CD4-positive, alpha-beta memory T cell (primary cell): ENCODE measurements at regions of chr2 and their contacts with region 1.

Region 1: GRCh38 chr2:68909793-68910674 is 38.8 kb upstream of the BMP10 start:
- DNase-seq: peak; percentile 43 to 69 (median 54)
- H3K4me3 ChIP-seq: no peak overlapping the region
- H3K4me3 Mint-ChIP-seq: peak overlapping the region in 5 of 8 donors; percentile 15 to 70 (median 55)
- H3K27ac ChIP-seq: no peak overlapping the region
- H3K27ac Mint-ChIP-seq: peak overlapping the region; percentile 70 to 92 (median 84)
- H3K4me1 ChIP-seq: peaks cover 76% of the 10 kb centered on the region
- H3K4me1 Mint-ChIP-seq: peaks cover 31 to 38% (median 36%) of the 10 kb centered on the region in 4 donors
- H3K27me3 ChIP-seq: no peaks in the 10 kb centered on the region
- H3K27me3 Mint-ChIP-seq: no peaks in the 10 kb centered on the region

Region 2: DNA sequence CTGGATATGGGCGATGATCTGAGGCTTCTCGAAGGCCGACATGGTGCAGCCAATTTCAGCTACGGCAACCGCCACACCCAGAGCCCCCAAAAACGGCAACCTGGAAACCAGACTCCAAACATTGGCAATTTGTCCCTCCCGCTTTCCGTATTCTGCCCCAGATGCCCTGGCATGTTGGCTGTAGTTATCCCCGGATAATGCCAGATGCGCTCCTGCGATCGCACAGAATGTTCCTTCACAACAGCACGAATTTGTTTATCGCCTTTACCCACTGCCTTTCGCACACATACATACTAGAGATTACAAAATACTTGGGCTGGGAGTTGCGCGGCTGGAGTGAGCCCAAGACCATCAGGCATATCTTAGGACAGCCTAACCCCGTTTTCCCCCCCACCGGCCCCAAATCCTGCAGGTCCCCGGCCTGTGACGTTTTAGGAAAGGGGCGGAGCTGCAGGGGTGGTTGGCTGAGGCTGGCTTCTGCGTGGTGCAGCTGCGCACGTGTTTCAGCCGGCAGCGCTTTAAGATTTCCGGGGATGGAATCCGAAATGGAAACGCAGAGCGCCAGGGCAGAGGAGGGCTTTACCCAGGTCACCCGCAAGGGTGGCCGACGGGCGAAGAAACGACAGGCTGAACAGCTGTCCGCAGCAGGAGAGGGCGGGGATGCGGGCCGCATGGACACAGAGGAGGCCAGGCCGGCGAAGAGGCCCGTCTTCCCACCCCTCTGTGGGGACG is 752.5 kb before region 1 on chr2 and contains the start of gene PNO1:
- CTCF ChIA-PET with region 1: no interaction called
- POLR2A ChIA-PET with region 1: no interaction called
- intact Hi-C with region 1: loop called (anchors 5 kb)
- DNase-seq: peak; percentile 97 to 98 (median 98)
- H3K4me3 ChIP-seq: peak within 1 kb of the TSS; percentile 82 to 97
- H3K4me3 Mint-ChIP-seq: peak within 1 kb of the TSS; percentile 95 to 99 (median 98)
- H3K27ac ChIP-seq: peak within 1 kb of the TSS; percentile 97
- H3K27ac Mint-ChIP-seq: peak within 1 kb of the TSS; percentile 99 to 100 (median 100)
- H3K4me1 ChIP-seq: peaks cover 40% of the 10 kb centered on the region
- H3K4me1 Mint-ChIP-seq: peaks cover 29 to 65% (median 45%) of the 10 kb centered on the region in 4 donors
- H3K27me3 ChIP-seq: no peaks in the 10 kb centered on the region
- H3K27me3 Mint-ChIP-seq: peaks cover 0 to 2% of the 10 kb centered on the region in 2 donors
- total RNA-seq, gene PNO1: 8.7 to 11.3 TPM

Region 3: DNA sequence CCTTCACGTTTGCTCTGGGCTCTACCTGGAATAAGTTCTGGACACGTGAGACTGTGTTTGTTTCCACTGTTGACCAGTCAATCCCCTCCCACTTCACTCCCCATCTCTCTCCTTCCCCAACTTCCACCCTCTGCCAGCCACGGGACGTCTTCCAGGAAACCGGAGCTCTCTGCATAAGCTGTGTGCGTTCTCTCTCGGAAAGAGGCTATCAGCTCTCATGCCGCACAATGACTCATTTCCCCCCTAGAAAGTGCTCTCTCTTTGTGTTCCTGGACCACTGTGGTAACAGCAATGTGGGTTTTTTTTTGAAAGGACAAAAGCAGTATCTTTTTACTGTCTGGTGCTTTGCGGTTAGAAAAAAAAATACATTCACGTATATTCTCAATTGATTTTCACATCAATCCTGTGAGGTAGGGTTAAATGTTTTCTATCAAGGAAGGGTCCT is 256.5 kb before region 1 on chr2:
- CTCF ChIA-PET with region 1: no interaction called
- POLR2A ChIA-PET with region 1: no interaction called
- intact Hi-C with region 1: no loop called
- DNase-seq: peak; percentile 1 to 60 (median 21)
- H3K4me3 ChIP-seq: no peak overlapping the region
- H3K4me3 Mint-ChIP-seq: peak overlapping the region in 5 of 8 donors; percentile 12 to 58 (median 40)
- H3K27ac ChIP-seq: no peak overlapping the region
- H3K27ac Mint-ChIP-seq: peak overlapping the region in 5 of 7 donors; percentile 4 to 37 (median 26)
- H3K4me1 ChIP-seq: peaks cover 24% of the 10 kb centered on the region
- H3K4me1 Mint-ChIP-seq: peaks cover 10 to 32% (median 19%) of the 10 kb centered on the region in 4 donors
- H3K27me3 ChIP-seq: no peaks in the 10 kb centered on the region
- H3K27me3 Mint-ChIP-seq: peaks cover 2 to 11% of the 10 kb centered on the region in 2 donors

Region 4: GRCh38 chr2:68715353-68716041 is 194.5 kb before region 1 on chr2:
- CTCF ChIA-PET with region 1: interaction called, 73 read pairs
- POLR2A ChIA-PET with region 1: interaction called, 24 read pairs
- intact Hi-C with region 1: no loop called
- DNase-seq: peak; percentile 39 to 55 (median 45)
- H3K4me3 ChIP-seq: peak overlapping the region in 1 of 2 donors; percentile 37
- H3K4me3 Mint-ChIP-seq: peak overlapping the region in 7 of 8 donors; percentile 44 to 76 (median 56)
- H3K27ac ChIP-seq: peak overlapping the region; percentile 29
- H3K27ac Mint-ChIP-seq: peak overlapping the region; percentile 54 to 93 (median 86)
- H3K4me1 ChIP-seq: peaks cover 63% of the 10 kb centered on the region
- H3K4me1 Mint-ChIP-seq: peaks cover 63 to 88% (median 70%) of the 10 kb centered on the region in 4 donors
- H3K27me3 ChIP-seq: no peaks in the 10 kb centered on the region
- H3K27me3 Mint-ChIP-seq: no peaks in the 10 kb centered on the region

Region 5: GRCh38 chr2:68742626-68743415 is 167.2 kb before region 1 on chr2:
- CTCF ChIA-PET with region 1: interaction called, 81 read pairs
- POLR2A ChIA-PET with region 1: interaction called, 22 read pairs
- intact Hi-C with region 1: no loop called
- DNase-seq: no peak
- H3K4me3 ChIP-seq: peak overlapping the region in 1 of 2 donors; percentile 29
- H3K4me3 Mint-ChIP-seq: peak overlapping the region; percentile 61 to 88 (median 79)
- H3K27ac ChIP-seq: no peak overlapping the region
- H3K27ac Mint-ChIP-seq: peak overlapping the region in 6 of 7 donors; percentile 78 to 93 (median 81)
- H3K4me1 ChIP-seq: peaks cover 99% of the 10 kb centered on the region
- H3K4me1 Mint-ChIP-seq: peaks cover 78 to 97% (median 89%) of the 10 kb centered on the region in 4 donors
- H3K27me3 ChIP-seq: no peaks in the 10 kb centered on the region
- H3K27me3 Mint-ChIP-seq: no peaks in the 10 kb centered on the region

Region 6: GRCh38 chr2:68774569-68775271 is 135.3 kb before region 1 on chr2:
- CTCF ChIA-PET with region 1: interaction called, 7 read pairs
- POLR2A ChIA-PET with region 1: interaction called, 10 read pairs
- intact Hi-C with region 1: loop called (anchors 5 kb)
- DNase-seq: peak; percentile 47 to 79 (median 51)
- H3K4me3 ChIP-seq: peak overlapping the region; percentile 57 to 63
- H3K4me3 Mint-ChIP-seq: peak overlapping the region; percentile 84 to 95 (median 87)
- H3K27ac ChIP-seq: peak overlapping the region; percentile 84
- H3K27ac Mint-ChIP-seq: peak overlapping the region; percentile 95 to 99 (median 97)
- H3K4me1 ChIP-seq: peaks cover 97% of the 10 kb centered on the region
- H3K4me1 Mint-ChIP-seq: peaks cover 78 to 90% (median 86%) of the 10 kb centered on the region in 4 donors
- H3K27me3 ChIP-seq: no peaks in the 10 kb centered on the region
- H3K27me3 Mint-ChIP-seq: no peaks in the 10 kb centered on the region

Region 7: GRCh38 chr2:68925295-68925896 is 15.4 kb after region 1 on chr2:
- CTCF ChIA-PET with region 1: interaction called, 47 read pairs
- POLR2A ChIA-PET with region 1: interaction called, 15 read pairs
- intact Hi-C with region 1: loop called (anchors 1 kb)
- DNase-seq: peak; percentile 57 to 73 (median 66)
- H3K4me3 ChIP-seq: no peak overlapping the region
- H3K4me3 Mint-ChIP-seq: peak overlapping the region in 1 of 8 donors; percentile 17
- H3K27ac ChIP-seq: no peak overlapping the region
- H3K27ac Mint-ChIP-seq: peak overlapping the region in 3 of 7 donors; percentile 17 to 43 (median 24)
- H3K4me1 ChIP-seq: peaks cover 4% of the 10 kb centered on the region
- H3K4me1 Mint-ChIP-seq: peaks cover 0 to 4% (median 2%) of the 10 kb centered on the region in 4 donors
- H3K27me3 ChIP-seq: no peaks in the 10 kb centered on the region
- H3K27me3 Mint-ChIP-seq: peaks cover 5 to 6% of the 10 kb centered on the region in 2 donors